ENCODE measurements at regions of chr1 and their contacts with region 1.

Region 1: GRCh38 chr1:214328770-214329469 is 48.0 kb downstream of the SMYD2 start:
- DNase-seq: peak; percentile 69 to 93 (median 86)

Region 2: DNA sequence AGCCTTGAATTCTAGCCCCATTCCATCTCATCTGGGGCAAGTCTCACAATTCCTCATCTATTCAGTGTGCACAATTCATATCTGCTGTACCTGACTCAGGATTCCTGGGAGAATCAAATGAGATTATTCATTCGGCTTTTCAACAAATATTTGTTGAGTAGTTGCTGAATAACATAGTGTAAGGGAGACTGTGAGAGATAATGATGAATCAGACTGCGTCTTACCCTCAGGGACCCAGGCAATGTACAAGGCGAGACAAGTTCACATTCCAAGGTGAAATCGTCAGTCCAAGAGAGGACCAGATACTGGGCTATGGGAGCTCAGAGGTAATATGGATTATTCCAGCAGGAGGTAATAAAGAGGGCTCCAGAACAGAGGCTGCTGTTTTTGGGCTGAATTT is 115.8 kb before region 1 on chr1:
- intact Hi-C with region 1: loop called (anchors 5 kb)
- DNase-seq: no peak

Region 3: DNA sequence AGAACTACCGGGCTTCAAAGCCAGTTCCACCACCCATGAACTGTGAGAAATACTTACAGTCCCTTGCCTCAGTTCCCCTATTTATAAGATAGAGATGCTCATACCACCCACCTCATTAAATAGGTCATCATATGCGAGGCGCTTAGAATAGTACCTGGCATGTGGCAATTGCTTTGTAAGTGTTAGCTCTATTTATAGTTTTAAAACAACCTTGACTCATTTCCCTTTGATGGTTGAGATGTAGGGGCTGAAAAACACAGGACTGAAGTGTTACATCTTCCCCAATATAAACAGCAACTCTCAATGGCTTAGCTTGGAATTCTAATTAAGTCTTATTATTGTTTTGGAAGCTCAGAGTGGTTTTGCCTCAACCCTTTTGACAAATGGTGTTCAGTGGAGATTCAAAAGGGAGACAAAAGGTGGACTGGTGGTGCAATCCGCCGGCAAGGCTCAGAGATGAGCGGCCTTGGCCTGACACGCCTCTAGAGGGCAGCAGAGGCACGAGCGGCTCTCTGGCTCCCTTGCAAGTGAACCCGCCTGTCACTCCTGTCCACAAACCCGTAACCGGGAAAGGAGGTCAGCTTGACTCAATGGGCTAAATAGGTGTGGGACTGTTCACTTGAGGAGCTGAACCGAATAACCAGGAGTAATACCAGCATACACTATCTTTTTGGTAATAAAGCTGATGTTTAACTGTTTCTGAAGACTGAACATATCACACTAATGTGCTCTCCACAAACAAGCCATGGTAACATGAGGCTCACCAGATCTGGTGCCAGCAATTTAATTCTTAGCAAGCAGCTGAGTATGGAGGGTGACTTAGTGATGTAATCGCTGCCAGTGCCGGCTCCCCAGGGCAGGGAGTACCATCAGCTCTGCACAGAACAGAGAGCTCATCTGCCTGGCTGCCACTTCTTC is 67.5 kb before region 1 on chr1:
- intact Hi-C with region 1: loop called (anchors 2 kb)
- DNase-seq: peak; percentile 54 to 92 (median 85)

Region 4: GRCh38 chr1:214550858-214551435 is 222.0 kb after region 1 on chr1:
- intact Hi-C with region 1: no loop called
- DNase-seq: peak in 19 of 42 donors; percentile 4 to 53 (median 20)